Sigmoid colon (tissue), 7 donors: ENCODE measurements at regions of chr18 and their contacts with region 1.

Region 1: DNA sequence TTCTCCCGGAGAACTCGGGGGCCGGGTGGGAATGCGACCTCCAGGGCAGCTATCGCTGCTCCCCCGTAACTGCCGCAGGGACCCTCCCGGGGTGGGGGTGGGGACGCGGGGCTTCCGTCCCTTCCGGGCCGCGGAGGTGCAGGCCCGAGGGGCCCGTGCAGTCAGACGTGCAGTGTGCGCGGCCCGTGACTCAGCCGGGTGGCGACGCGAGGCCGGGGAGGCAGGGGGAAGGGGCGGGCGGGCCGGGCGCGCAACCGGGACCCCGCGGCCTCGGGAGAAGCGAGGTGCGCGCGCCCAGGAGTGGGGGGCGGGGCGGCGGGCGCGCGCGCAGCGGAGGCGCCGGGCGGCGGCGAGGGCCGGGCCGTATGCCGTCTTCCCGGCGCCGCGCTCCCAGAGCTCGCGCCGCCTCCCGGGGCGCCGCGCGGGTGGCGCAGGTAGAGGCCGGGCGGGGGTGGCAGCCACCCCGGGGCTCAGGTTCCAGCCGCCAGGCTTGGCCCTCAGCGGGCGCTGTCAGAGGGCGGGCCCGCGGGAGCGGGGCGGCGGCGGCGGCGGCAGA is 25.0 kb upstream of the SMAD7 start:
- DNase-seq: no peak
- H3K4me3 ChIP-seq: peak overlapping the region; percentile 51 to 93 (median 60)
- H3K27ac ChIP-seq: peak overlapping the region; percentile 59 to 86 (median 68)
- H3K4me1 ChIP-seq: peaks cover 0 to 14% (median 8%) of the 10 kb centered on the region in 4 donors
- H3K27me3 ChIP-seq: no peaks in the 10 kb centered on the region
- CTCF ChIP-seq: no peak
- EP300 ChIP-seq: no peak
- POLR2A ChIP-seq: no peak

Region 2: GRCh38 chr18:48367557-48367956 is 608.2 kb before region 1 on chr18:
- intact Hi-C with region 1: no loop called
- DNase-seq: no peak
- H3K4me3 ChIP-seq: no peak overlapping the region
- H3K27ac ChIP-seq: no peak overlapping the region
- H3K4me1 ChIP-seq: no peaks in the 10 kb centered on the region
- H3K27me3 ChIP-seq: no peaks in the 10 kb centered on the region
- CTCF ChIP-seq: no peak
- EP300 ChIP-seq: no peak
- POLR2A ChIP-seq: no peak

Region 3: GRCh38 chr18:49178736-49179135 is 203.0 kb after region 1 on chr18:
- intact Hi-C with region 1: loop called (anchors 10 kb)
- DNase-seq: no peak
- H3K4me3 ChIP-seq: no peak overlapping the region
- H3K27ac ChIP-seq: no peak overlapping the region
- H3K4me1 ChIP-seq: no peaks in the 10 kb centered on the region
- H3K27me3 ChIP-seq: no peaks in the 10 kb centered on the region
- CTCF ChIP-seq: peak; percentile 7 to 27 (median 24)
- EP300 ChIP-seq: no peak
- POLR2A ChIP-seq: no peak